SK-N-SH (cell line): ENCODE measurements at regions of chr11 and their contacts with region 1.

Region 1: GRCh38 chr11:57493507-57494503 is 21.7 kb downstream of the SLC43A1 start:
- DNase-seq: peak; percentile 78
- H3K4me3 ChIP-seq: no peak overlapping the region; a peak in 1 of 4 replicates
- H3K27ac ChIP-seq: no peak overlapping the region
- H3K4me1 ChIP-seq: peaks cover 0 to 3% of the 10 kb centered on the region in 2 experiments; a peak in 1 of 4 replicates
- H3K27me3 ChIP-seq: no peaks in the 10 kb centered on the region
- CTCF ChIP-seq: peak; percentile 90
- EP300 ChIP-seq: no peak
- RAD21 ChIP-seq: peak; percentile 71

Region 2: DNA sequence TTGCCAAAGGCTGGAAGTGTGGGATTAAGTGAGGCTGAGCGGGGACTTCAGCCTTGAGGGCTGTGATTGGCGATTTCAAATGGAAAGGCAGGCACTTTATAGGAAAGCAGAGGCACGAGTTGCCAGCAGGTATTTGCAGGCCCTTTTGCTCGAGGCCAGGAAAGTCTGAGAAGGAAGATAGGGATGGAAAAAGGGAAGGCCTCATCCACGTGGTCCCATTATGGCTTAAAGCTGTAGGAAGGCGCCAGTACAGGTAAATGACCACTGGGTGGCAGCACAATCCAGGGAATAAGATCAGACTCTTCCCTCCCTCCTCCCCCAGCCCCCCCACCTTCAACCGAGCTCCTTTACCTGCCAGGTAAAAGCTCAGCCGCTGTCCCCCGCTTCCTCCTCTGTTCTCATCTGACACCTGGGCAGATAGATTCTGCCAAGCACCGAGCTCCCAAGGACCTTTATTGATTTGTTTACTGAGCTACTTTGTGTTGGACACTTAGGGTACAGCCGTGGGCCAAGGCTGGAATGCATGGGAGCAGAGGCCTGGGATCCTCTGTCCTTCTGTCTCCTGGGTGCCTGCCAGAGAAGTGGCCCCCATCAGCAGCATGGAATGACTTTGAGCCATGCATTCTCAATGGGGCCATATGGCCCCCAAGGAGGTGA is 148.1 kb before region 1 on chr11:
- CTCF ChIA-PET with region 1: interaction called, 13 read pairs
- POLR2A ChIA-PET with region 1: no interaction called
- DNase-seq: peak; percentile 86
- H3K4me3 ChIP-seq: no peak overlapping the region; a peak in 1 of 4 replicates
- H3K27ac ChIP-seq: no peak overlapping the region; a peak in 1 of 4 replicates
- H3K4me1 ChIP-seq: peaks cover 0 to 2% of the 10 kb centered on the region in 2 experiments; a peak in 1 of 4 replicates
- H3K27me3 ChIP-seq: no peaks in the 10 kb centered on the region
- CTCF ChIP-seq: peak; percentile 68
- EP300 ChIP-seq: no peak
- RAD21 ChIP-seq: peak; percentile 75

Region 3: GRCh38 chr11:57480409-57481137 is 13.2 kb before region 1 on chr11:
- CTCF ChIA-PET with region 1: interaction called, 97 read pairs
- POLR2A ChIA-PET with region 1: no interaction called
- DNase-seq: peak; percentile 82
- H3K4me3 ChIP-seq: peak overlapping the region in 1 of 2 experiments; percentile 26; a peak in 1 of 4 replicates
- H3K27ac ChIP-seq: no peak overlapping the region
- H3K4me1 ChIP-seq: peaks cover 4 to 17% of the 10 kb centered on the region in 2 experiments; a peak in 2 of 4 replicates
- H3K27me3 ChIP-seq: peaks cover 28% of the 10 kb centered on the region
- CTCF ChIP-seq: peak; percentile 61
- EP300 ChIP-seq: no peak
- RAD21 ChIP-seq: peak; percentile 52

Region 4: GRCh38 chr11:57521116-57521515 is 27.3 kb after region 1 on chr11:
- CTCF ChIA-PET with region 1: interaction called, 517 read pairs
- POLR2A ChIA-PET with region 1: interaction called, 12 read pairs
- DNase-seq: no peak
- H3K4me3 ChIP-seq: no peak overlapping the region
- H3K27ac ChIP-seq: no peak overlapping the region
- H3K4me1 ChIP-seq: no peaks in the 10 kb centered on the region
- H3K27me3 ChIP-seq: no peaks in the 10 kb centered on the region
- CTCF ChIP-seq: no peak
- EP300 ChIP-seq: no peak
- RAD21 ChIP-seq: no peak

Region 5: DNA sequence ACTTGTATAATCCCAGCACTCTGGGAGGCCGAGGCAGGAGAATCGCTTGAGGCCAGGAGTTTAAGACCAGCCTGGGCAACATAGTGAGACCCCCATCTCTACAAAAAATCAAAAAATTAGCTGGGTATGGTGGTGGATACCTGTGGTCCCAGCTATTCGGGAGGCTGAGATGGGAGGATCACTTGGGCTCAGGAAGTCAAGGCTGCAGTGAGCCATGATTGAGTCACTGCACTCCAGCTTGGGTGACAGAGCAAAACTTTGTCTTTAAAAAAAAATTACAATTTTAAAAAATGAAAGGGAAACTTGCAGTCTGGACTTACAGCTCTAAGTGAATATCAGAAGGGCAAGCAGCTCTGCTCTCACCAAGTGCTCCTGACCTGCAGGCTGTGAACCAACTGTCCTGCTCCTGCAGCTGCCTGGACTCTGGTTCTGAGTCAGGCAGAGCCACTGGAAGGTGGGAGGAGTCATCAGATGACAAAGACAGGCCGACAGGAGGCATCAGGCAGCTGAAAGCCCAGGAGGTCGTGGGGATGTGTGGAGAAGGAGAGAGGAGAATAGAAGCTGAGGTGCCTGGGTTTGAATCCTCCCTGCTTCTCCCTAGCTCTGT is 53.2 kb after region 1 on chr11:
- CTCF ChIA-PET with region 1: interaction called, 12 read pairs
- POLR2A ChIA-PET with region 1: no interaction called
- DNase-seq: peak; percentile 35
- H3K4me3 ChIP-seq: no peak overlapping the region
- H3K27ac ChIP-seq: no peak overlapping the region
- H3K4me1 ChIP-seq: no peaks in the 10 kb centered on the region; a peak in 1 of 4 replicates
- H3K27me3 ChIP-seq: no peaks in the 10 kb centered on the region
- CTCF ChIP-seq: no peak
- EP300 ChIP-seq: no peak
- RAD21 ChIP-seq: no peak